HEK293 (cell line): ENCODE measurements at regions of chr19 and their contacts with region 1.

Region 1: DNA sequence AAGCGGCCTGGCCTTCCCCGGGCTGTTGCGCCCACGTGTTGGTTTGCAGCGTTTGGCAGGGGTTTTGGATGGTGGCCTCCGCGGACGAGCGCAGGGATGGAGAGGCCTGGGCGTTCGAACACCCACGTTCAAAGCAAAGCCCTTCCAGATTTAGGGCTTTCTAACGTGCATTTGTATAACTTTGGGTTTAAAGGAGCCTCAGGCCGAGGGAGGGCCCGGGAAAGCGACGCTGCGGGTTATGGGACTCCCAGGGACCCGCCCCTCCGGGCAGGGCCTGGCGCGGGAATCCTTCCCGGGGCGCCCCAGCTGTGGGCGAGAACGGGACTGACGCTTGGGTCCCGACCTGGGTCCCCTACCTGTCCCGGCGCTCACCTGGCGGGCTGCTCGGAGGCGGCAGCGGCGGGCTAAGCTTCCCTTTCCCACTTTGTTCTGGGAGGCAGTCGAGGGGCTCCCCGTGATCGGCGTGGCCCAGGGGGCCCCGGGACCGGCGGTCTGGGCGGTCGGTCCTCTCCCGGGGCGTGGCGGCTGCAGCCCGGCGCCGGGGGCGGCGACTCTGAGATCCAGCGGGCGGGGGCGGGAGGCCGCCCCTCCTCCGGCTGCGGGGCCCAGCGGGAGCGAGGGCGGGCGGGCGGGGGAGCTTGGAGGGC is at the start of gene FBXO17:
- H3K4me3 ChIP-seq: peak within 1 kb of the TSS; percentile 65
- H3K27ac ChIP-seq: peak within 1 kb of the TSS; percentile 96
- H3K4me1 ChIP-seq: peaks cover 32% of the 10 kb centered on the region
- CTCF ChIP-seq: no peak

Region 2: DNA sequence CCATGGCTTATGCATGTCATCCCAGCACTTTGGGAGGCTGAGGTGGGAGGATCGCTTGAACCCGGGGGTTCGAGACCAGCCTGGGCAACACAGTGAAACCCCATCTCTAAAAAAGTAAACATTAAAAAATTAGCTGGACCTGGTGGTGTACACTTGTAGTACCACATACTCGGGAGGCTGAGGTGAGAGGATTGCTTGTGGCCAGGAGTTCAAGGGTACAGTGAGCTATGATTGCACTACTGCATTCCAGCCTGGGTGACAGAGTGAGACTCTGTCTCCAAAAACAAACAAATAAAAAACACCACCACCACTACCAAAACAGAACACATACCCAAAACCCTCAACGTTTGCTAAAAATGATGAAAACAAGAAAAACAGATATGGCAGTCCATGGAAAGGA is 15.7 kb before region 1 on chr19:
- CTCF ChIA-PET with region 1: interaction called, 62 read pairs
- POLR2A ChIA-PET with region 1: interaction called, 9 read pairs
- H3K4me3 ChIP-seq: no peak overlapping the region
- H3K27ac ChIP-seq: no peak overlapping the region
- H3K4me1 ChIP-seq: peaks cover 3% of the 10 kb centered on the region; the same call in 1 of the 2 replicates
- CTCF ChIP-seq: no peak

Region 3: GRCh38 chr19:38989066-38989605 is 13.8 kb after region 1 on chr19:
- CTCF ChIA-PET with region 1: interaction called, 39 read pairs
- POLR2A ChIA-PET with region 1: interaction called, 20 read pairs
- H3K4me3 ChIP-seq: no peak overlapping the region
- H3K27ac ChIP-seq: peak overlapping the region; percentile 74
- H3K4me1 ChIP-seq: peaks cover 12% of the 10 kb centered on the region
- CTCF ChIP-seq: no peak

Region 4: GRCh38 chr19:39014037-39014436 is 38.7 kb after region 1 on chr19:
- CTCF ChIA-PET with region 1: interaction called, 21 read pairs
- POLR2A ChIA-PET with region 1: interaction called, 4 read pairs
- H3K4me3 ChIP-seq: no peak overlapping the region
- H3K27ac ChIP-seq: no peak overlapping the region
- H3K4me1 ChIP-seq: no peaks in the 10 kb centered on the region
- CTCF ChIP-seq: no peak

Region 5: GRCh38 chr19:39052243-39052746 is 77.0 kb after region 1 on chr19:
- CTCF ChIA-PET with region 1: interaction called, 10 read pairs
- POLR2A ChIA-PET with region 1: no interaction called
- H3K4me3 ChIP-seq: no peak overlapping the region
- H3K27ac ChIP-seq: no peak overlapping the region
- H3K4me1 ChIP-seq: no peaks in the 10 kb centered on the region
- CTCF ChIP-seq: peak; percentile 98